Colonic mucosa (tissue), 4 donors: ENCODE measurements at regions of chr6 and their contacts with region 1.

Region 1: DNA sequence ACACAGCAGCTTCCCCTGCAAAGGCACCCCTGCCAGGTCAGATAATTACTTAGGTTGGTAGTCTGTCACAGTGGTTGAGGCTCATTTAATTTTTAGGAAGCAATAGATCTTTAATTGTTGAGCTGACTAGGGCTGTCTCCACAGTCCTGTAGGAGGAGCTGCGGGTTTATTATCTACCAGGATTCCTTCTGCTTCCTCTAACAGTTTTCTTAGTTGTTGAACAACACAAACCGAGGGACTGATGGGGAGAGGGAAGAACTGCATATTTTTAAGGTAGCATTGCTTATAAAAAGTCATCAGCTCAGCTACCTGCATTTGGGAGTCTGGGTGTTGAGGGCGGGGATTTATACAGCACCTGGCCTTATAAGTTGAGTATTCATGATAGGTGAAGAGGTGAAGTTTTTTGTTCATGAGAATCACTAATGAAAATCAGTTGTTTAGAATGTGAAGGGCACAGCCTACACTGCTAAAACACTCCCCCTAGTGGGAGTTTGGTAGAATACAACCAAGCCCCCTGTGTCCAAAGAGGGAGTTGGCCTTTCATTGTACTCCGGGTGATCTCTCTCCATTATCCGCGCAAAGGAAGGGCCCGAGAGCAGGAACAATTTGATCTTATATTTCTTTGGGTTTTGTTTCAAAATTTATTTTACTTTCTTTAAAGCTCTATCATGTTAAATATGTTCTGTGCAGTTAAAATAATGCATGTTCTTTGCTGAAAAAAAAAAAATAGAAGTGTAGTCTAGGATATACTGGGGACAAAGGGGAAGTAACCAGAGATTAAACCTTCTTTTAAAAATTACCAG is 69.6 kb downstream of the SSR1 start:
- DNase-seq: peak; percentile 63
- H3K4me3 ChIP-seq: no peak overlapping the region
- H3K27ac ChIP-seq: peak overlapping the region; percentile 74
- H3K4me1 ChIP-seq: peaks cover 13% of the 10 kb centered on the region
- H3K27me3 ChIP-seq: no peaks in the 10 kb centered on the region
- CTCF ChIP-seq: peak; percentile 88

Region 2: DNA sequence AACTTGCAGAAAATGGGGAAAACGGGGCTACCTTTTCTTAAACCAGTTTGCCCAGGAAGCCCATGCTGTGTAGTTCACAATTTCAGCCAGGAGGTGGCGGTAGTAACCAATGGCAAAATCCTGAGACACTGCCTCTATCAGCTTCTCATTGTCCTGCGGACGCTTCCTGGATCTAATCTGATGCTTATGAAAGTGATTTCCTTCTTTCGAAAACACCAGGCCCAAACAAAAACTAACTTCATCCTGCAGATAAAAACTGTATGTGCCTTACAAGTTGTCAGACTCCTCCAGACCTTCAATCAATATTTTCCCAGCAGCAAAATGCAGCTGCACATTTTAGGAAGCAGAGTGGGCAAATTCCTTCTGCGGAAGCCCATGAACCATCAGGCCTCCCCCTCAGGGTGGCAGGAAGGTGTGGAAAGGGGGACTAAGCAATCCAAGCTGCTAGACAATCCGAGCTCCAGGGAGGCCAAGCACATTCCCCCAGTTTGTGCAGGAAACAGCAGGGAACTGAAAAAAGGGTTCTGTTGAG is 566.4 kb before region 1 on chr6:
- intact Hi-C with region 1: loop called (anchors 5 kb)
- DNase-seq: peak; percentile 93
- H3K4me3 ChIP-seq: no peak overlapping the region
- H3K27ac ChIP-seq: peak overlapping the region; percentile 64
- H3K4me1 ChIP-seq: peaks cover 6% of the 10 kb centered on the region
- H3K27me3 ChIP-seq: no peaks in the 10 kb centered on the region
- CTCF ChIP-seq: peak; percentile 98

Region 3: GRCh38 chr6:6724539-6725467 is 518.6 kb before region 1 on chr6:
- intact Hi-C with region 1: loop called (anchors 10 kb)
- DNase-seq: peak; percentile 84
- H3K4me3 ChIP-seq: peak overlapping the region; percentile 30
- H3K27ac ChIP-seq: peak overlapping the region; percentile 96
- H3K4me1 ChIP-seq: peaks cover 21% of the 10 kb centered on the region
- H3K27me3 ChIP-seq: no peaks in the 10 kb centered on the region
- CTCF ChIP-seq: peak; percentile 58

Region 4: GRCh38 chr6:6840831-6841291 is 402.5 kb before region 1 on chr6:
- intact Hi-C with region 1: no loop called
- DNase-seq: no peak
- H3K4me3 ChIP-seq: no peak overlapping the region
- H3K27ac ChIP-seq: no peak overlapping the region
- H3K4me1 ChIP-seq: no peaks in the 10 kb centered on the region
- H3K27me3 ChIP-seq: no peaks in the 10 kb centered on the region
- CTCF ChIP-seq: no peak

Region 5: GRCh38 chr6:7282097-7282906 is 38.9 kb after region 1 on chr6:
- intact Hi-C with region 1: no loop called
- DNase-seq: no peak
- H3K4me3 ChIP-seq: no peak overlapping the region
- H3K27ac ChIP-seq: no peak overlapping the region
- H3K4me1 ChIP-seq: no peaks in the 10 kb centered on the region
- H3K27me3 ChIP-seq: no peaks in the 10 kb centered on the region
- CTCF ChIP-seq: no peak

Region 6: DNA sequence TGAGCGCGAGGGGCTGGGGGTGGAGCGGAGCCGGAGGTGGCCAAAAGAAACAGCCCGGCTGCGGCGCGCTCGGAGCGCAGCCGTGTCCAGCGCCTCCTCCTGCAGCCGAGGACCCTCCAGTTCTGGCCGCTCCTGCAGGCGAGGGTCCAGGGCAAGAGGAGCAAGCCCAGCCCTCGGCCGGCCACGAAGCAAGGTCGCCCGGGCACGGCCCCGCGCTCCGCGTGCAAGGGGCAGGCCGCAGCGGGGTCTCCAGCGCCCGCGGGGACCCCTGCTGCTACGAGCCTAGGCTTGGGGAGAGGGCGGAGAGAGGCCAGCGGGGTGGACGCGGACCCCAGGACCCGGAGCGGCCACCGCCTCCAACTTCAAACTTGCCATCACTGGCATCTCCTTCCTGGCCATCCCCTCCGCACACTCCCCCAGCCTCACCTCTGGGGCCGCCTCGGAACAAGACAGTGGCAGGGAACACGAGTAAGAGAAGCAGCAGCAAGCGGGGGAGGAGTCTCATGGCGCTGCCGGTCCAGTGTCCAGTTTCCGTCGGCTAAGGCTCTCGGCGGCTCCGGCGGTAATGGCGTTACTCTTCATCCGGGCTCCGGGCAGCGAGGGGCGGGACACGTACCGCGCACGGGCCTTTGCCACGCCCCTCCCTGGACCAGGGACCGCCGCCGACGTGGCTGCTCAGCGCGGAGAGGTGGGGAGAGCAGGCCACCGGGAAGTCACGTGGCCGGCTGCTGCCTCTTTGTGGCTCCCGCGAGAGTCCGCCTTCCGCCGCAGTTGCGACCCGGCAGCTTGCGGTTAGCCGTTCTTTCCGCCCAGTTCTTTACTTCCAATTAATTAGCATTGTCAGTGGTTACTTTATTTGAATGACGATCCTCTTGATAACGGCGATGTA is 69.5 kb after region 1 on chr6 and contains the start of gene SSR1:
- intact Hi-C with region 1: no loop called
- DNase-seq: peak; percentile 97
- H3K4me3 ChIP-seq: peak within 1 kb of the TSS; percentile 87
- H3K27ac ChIP-seq: peak within 1 kb of the TSS; percentile 93
- H3K4me1 ChIP-seq: peaks cover 6% of the 10 kb centered on the region
- H3K27me3 ChIP-seq: no peaks in the 10 kb centered on the region
- CTCF ChIP-seq: no peak
- total RNA-seq, gene SSR1: 150 to 153 TPM